ENCODE measurements at regions of chr1 and their contacts with region 1.

Region 1: GRCh38 chr1:61453111-61453961 is 271.6 kb downstream of the TM2D1 start:
- DNase-seq: peak; percentile 79 to 91
- ATAC-seq: peak; percentile 66 to 88 (median 78)
- H3K4me3 ChIP-seq: peak overlapping the region in 2 of 10 donors; percentile 1 to 9
- H3K27ac ChIP-seq: peak overlapping the region; percentile 51 to 91 (median 83)
- H3K4me1 ChIP-seq: peaks cover 33 to 68% (median 65%) of the 10 kb centered on the region in 9 donors
- H3K27me3 ChIP-seq: no peaks in the 10 kb centered on the region
- CTCF ChIP-seq: peak; percentile 49 to 88 (median 82)

Region 2: GRCh38 chr1:60978421-60979357 is 474.6 kb before region 1 on chr1:
- intact Hi-C with region 1: loop called in 5 of 10 experiments (anchors 5 to 10 kb)
- DNase-seq: peak in 1 of 2 donors; percentile 23
- ATAC-seq: peak in 4 of 8 donors; percentile 39 to 61 (median 43)
- H3K4me3 ChIP-seq: no peak overlapping the region
- H3K27ac ChIP-seq: no peak overlapping the region
- H3K4me1 ChIP-seq: peaks cover 0 to 14% (median 6%) of the 10 kb centered on the region in 9 donors
- H3K27me3 ChIP-seq: no peaks in the 10 kb centered on the region
- CTCF ChIP-seq: peak in 8 of 9 donors; percentile 16 to 67 (median 53)

Region 3: GRCh38 chr1:61077676-61078541 is 375.4 kb before region 1 on chr1:
- intact Hi-C with region 1: loop called in 3 of 10 experiments (anchors 2 to 10 kb)
- DNase-seq: peak; percentile 84 to 97
- ATAC-seq: peak; percentile 74 to 91 (median 86)
- H3K4me3 ChIP-seq: peak overlapping the region; percentile 47 to 77 (median 66)
- H3K27ac ChIP-seq: peak overlapping the region; percentile 71 to 99 (median 94)
- H3K4me1 ChIP-seq: peaks cover 16 to 45% (median 39%) of the 10 kb centered on the region in 9 donors
- H3K27me3 ChIP-seq: no peaks in the 10 kb centered on the region
- CTCF ChIP-seq: peak in 1 of 9 donors; percentile 25

Region 4: DNA sequence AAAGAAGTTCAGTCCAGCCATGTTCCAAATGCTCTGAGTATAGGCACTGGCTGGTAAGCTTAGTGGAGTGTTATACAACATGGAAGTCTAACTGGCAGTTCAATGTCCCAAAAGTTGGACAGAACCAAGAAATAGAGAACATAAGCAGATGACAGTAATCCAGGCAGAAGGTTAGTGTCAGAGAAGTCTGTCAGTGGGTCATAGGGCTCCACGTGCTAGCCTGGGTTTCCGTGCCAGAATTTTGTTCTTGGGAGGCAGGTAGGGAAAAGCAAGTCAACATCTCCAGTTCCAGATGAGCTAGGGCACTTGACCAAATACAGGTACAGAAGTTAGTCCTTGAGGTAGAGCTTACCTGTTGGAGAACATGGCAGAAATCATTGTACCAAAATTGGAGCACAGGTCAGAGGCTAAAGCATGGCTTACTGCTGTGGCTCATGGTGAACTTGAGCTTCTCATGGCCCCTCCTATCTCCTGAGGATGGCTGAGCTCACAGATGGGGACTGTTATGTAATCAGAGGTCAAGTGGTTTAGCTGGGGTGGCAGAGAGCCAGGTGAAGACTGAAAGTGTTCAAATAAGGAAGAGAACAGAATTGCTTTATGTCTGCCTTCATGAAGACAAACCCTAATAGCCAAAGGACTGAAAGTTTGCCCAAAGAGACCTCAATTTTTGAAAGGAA is 200.1 kb before region 1 on chr1:
- intact Hi-C with region 1: loop called in 2 of 10 experiments (anchors 10 kb)
- DNase-seq: peak; percentile 44 to 81
- ATAC-seq: peak; percentile 67 to 82 (median 77)
- H3K4me3 ChIP-seq: no peak overlapping the region
- H3K27ac ChIP-seq: peak overlapping the region in 9 of 10 donors; percentile 23 to 78 (median 70)
- H3K4me1 ChIP-seq: peaks cover 19 to 90% (median 57%) of the 10 kb centered on the region in 9 donors
- H3K27me3 ChIP-seq: no peaks in the 10 kb centered on the region
- CTCF ChIP-seq: no peak

Region 5: DNA sequence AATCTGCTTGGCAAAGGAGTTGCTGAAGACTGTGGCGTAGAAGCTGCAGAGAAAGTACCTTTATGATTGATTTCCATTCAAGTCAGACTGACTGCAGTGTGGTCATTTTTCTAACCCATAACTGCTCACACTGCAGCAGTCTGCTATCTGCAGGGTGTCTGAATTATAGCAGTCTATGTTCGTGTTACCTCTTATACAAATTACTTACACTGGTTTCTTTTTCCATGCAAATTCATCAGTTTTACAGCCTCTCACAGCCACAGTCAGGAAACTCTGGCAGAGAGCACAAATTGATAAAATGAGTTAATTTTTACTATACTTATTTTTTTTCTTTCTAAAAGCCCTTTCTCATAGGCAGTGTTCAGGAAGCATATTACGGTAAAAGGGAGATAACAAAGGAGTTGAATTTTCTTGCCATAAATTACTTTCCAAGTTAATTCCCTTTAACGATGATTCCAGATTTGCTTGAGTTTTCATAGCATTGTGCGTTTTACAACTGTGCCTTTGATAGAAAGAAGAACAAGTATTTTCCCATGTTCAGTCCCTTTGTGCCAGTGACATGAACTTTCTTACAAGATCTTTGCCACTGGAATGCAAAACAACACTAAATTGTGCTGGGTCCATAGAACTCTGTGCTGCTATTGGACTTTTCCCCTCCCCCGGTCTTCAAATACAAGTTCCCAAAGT is 109.5 kb before region 1 on chr1:
- intact Hi-C with region 1: loop called in 8 of 10 experiments (anchors 5 to 10 kb)
- DNase-seq: no peak
- ATAC-seq: peak in 3 of 8 donors; percentile 18 to 31 (median 22)
- H3K4me3 ChIP-seq: no peak overlapping the region
- H3K27ac ChIP-seq: peak overlapping the region in 5 of 10 donors; percentile 3 to 55 (median 24)
- H3K4me1 ChIP-seq: peaks cover 5 to 44% (median 32%) of the 10 kb centered on the region in 9 donors
- H3K27me3 ChIP-seq: no peaks in the 10 kb centered on the region
- CTCF ChIP-seq: no peak

Region 6: DNA sequence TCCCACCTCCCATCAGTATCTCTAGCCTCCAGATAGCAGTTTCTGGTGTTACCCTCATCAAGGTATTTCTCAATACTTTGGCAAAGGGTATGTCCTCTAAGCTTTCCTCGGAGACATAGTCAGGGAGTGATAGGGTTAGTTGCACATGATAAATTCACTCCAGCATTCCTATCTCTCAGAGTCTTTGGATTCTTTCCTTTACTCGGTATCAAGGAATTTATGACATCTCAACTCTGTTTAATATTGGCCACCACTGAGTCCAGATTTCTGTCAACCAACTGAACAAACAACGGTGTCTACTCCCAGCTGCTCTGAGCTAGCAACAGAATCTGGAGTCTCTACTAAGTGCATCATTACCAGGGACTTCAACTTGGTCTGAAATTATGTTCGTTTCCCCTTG is 38.2 kb after region 1 on chr1:
- intact Hi-C with region 1: no loop called
- DNase-seq: no peak
- ATAC-seq: peak; percentile 72 to 91 (median 87)
- H3K4me3 ChIP-seq: no peak overlapping the region
- H3K27ac ChIP-seq: peak overlapping the region in 8 of 10 donors; percentile 34 to 63 (median 53)
- H3K4me1 ChIP-seq: peaks cover 0 to 26% (median 8%) of the 10 kb centered on the region in 9 donors
- H3K27me3 ChIP-seq: no peaks in the 10 kb centered on the region
- CTCF ChIP-seq: no peak

Measured in heart right ventricle (tissue), 16 donors.